ENCODE measurements at regions of chr6 and their contacts with region 1.

Region 1: GRCh38 chr6:90204327-90205056 is 92.2 kb downstream of the BACH2 start:
- DNase-seq: no peak
- ATAC-seq: no peak
- H3K4me3 ChIP-seq: no peak overlapping the region
- H3K4me3 Mint-ChIP-seq: no peak overlapping the region
- H3K27ac ChIP-seq: no peak overlapping the region
- H3K27ac Mint-ChIP-seq: no peak overlapping the region
- H3K4me1 ChIP-seq: peaks cover 6% of the 10 kb centered on the region
- H3K4me1 Mint-ChIP-seq: peaks cover 79% of the 10 kb centered on the region
- H3K27me3 ChIP-seq: no peaks in the 10 kb centered on the region
- H3K27me3 Mint-ChIP-seq: no peaks in the 10 kb centered on the region
- CTCF ChIP-seq: no peak

Region 2: GRCh38 chr6:90241229-90241880 is 36.9 kb after region 1 on chr6:
- CTCF ChIA-PET with region 1: no interaction called
- POLR2A ChIA-PET with region 1: no interaction called
- intact Hi-C with region 1: loop called in 1 of 2 experiments (anchors 5 kb)
- DNase-seq: peak in 2 of 14 experiments; percentile 29 to 42
- ATAC-seq: no peak
- H3K4me3 ChIP-seq: no peak overlapping the region
- H3K4me3 Mint-ChIP-seq: peak overlapping the region; percentile 30
- H3K27ac ChIP-seq: peak overlapping the region in 1 of 2 donors; percentile 21
- H3K27ac Mint-ChIP-seq: peak overlapping the region; percentile 60
- H3K4me1 ChIP-seq: peaks cover 25% of the 10 kb centered on the region
- H3K4me1 Mint-ChIP-seq: peaks cover 74% of the 10 kb centered on the region
- H3K27me3 ChIP-seq: no peaks in the 10 kb centered on the region
- H3K27me3 Mint-ChIP-seq: no peaks in the 10 kb centered on the region
- CTCF ChIP-seq: no peak